Caco-2 (cell line): ENCODE measurements at regions of chr2 and their contacts with region 1.

Region 1: DNA sequence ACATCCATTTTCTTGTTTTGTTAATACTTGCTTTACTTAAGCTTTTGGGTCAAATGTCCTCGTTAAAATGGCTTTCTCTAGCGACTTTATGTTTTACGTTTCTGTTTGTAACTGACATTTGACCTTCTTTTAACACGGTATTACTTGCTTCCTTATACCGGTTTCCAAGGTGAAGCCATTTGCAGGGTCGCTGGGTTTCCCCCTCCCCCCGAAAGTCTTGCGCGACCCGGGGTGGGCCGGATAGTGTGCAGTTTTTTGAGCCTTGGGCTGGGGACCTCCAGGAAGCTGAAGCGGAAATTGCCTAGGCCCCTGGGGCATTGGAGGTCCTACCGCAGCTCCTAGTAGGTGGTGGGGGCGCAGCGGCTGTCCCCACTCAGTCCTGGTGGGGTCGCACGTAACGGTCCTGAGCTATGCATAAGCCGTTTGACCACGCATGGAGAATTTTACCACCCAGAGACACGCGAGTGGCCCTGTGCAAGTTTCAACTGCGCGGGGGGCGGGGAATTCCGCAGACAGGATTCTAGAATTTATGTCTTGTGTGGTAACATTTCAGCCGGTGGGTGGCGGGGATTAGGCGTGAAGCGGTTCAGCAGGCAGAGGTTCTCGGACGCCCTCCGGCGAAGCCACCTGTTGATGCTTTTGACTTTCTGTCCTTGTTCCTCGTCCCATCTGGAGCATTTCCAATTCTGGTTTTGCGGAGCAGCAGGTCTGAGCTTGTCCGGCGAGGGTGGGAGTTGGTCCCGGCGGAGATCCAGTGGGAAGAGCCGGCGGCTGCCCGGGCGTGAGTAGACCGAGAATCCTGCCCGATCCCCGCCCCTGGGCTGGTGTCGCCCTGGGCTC is 2.4 kb downstream of the CFLAR start:
- DNase-seq: peak; percentile 89 to 91
- H3K4me3 ChIP-seq: peak overlapping the region; percentile 85
- H3K4me3 Mint-ChIP-seq: peak overlapping the region; percentile 98
- H3K27ac Mint-ChIP-seq: peak overlapping the region; percentile 91
- H3K4me1 ChIP-seq: peaks cover 42% of the 10 kb centered on the region
- H3K4me1 Mint-ChIP-seq: peaks cover 39% of the 10 kb centered on the region
- H3K27me3 ChIP-seq: no peaks in the 10 kb centered on the region
- H3K27me3 Mint-ChIP-seq: no peaks in the 10 kb centered on the region
- CTCF ChIP-seq: peak; percentile 16 to 58

Region 2: GRCh38 chr2:200888704-200889625 is 229.4 kb before region 1 on chr2 and contains the starts of genes NIF3L1 and PPIL3:
- CTCF ChIA-PET with region 1: no interaction called
- POLR2A ChIA-PET with region 1: no interaction called
- intact Hi-C with region 1: loop called (anchors 5 kb)
- DNase-seq: peak; percentile 98 to 99
- H3K4me3 ChIP-seq: peak within 1 kb of the TSS; percentile 56
- H3K4me3 Mint-ChIP-seq: peak within 1 kb of the TSS; percentile 89
- H3K27ac Mint-ChIP-seq: peak within 1 kb of the TSS; percentile 97
- H3K4me1 ChIP-seq: 0 out of 2 replicates have a peak, but pooled peaks cover 3% of the 10 kb centered on the region
- H3K4me1 Mint-ChIP-seq: peaks cover 19% of the 10 kb centered on the region
- H3K27me3 ChIP-seq: no peaks in the 10 kb centered on the region
- H3K27me3 Mint-ChIP-seq: no peaks in the 10 kb centered on the region
- CTCF ChIP-seq: no peak
- total RNA-seq, gene NIF3L1: 40.7 and 49.7 TPM in 2 replicates
- total RNA-seq, gene PPIL3: 17.6 and 25.0 TPM in 2 replicates

Region 3: GRCh38 chr2:200963124-200963917 is 155.0 kb before region 1 on chr2 and contains the start of gene ORC2:
- CTCF ChIA-PET with region 1: no interaction called
- POLR2A ChIA-PET with region 1: no interaction called
- intact Hi-C with region 1: loop called (anchors 2 kb)
- DNase-seq: peak; percentile 96 to 98
- H3K4me3 ChIP-seq: peak within 1 kb of the TSS; percentile 64
- H3K4me3 Mint-ChIP-seq: peak within 1 kb of the TSS; percentile 91
- H3K27ac Mint-ChIP-seq: peak within 1 kb of the TSS; percentile 97
- H3K4me1 ChIP-seq: peaks cover 30% of the 10 kb centered on the region
- H3K4me1 Mint-ChIP-seq: peaks cover 29% of the 10 kb centered on the region
- H3K27me3 ChIP-seq: no peaks in the 10 kb centered on the region
- H3K27me3 Mint-ChIP-seq: no peaks in the 10 kb centered on the region
- CTCF ChIP-seq: peak; percentile 70 to 76
- total RNA-seq, gene ORC2: 45.5 and 47.3 TPM in 2 replicates

Region 4: GRCh38 chr2:201071479-201072200 is 46.7 kb before region 1 on chr2 and contains the starts of genes HYCC2 and NDUFB3:
- CTCF ChIA-PET with region 1: interaction called, 5 read pairs
- POLR2A ChIA-PET with region 1: no interaction called
- intact Hi-C with region 1: loop called (anchors 1 kb)
- DNase-seq: peak; percentile 96
- H3K4me3 ChIP-seq: peak within 1 kb of the TSS; percentile 71
- H3K4me3 Mint-ChIP-seq: peak within 1 kb of the TSS; percentile 87
- H3K27ac Mint-ChIP-seq: peak within 1 kb of the TSS; percentile 89
- H3K4me1 ChIP-seq: peaks cover 24% of the 10 kb centered on the region
- H3K4me1 Mint-ChIP-seq: peaks cover 11% of the 10 kb centered on the region
- H3K27me3 ChIP-seq: no peaks in the 10 kb centered on the region
- H3K27me3 Mint-ChIP-seq: no peaks in the 10 kb centered on the region
- CTCF ChIP-seq: peak; percentile 7 to 29
- total RNA-seq, gene HYCC2: 21.8 and 21.9 TPM in 2 replicates
- total RNA-seq, gene NDUFB3: 117 and 118 TPM in 2 replicates

Region 5: DNA sequence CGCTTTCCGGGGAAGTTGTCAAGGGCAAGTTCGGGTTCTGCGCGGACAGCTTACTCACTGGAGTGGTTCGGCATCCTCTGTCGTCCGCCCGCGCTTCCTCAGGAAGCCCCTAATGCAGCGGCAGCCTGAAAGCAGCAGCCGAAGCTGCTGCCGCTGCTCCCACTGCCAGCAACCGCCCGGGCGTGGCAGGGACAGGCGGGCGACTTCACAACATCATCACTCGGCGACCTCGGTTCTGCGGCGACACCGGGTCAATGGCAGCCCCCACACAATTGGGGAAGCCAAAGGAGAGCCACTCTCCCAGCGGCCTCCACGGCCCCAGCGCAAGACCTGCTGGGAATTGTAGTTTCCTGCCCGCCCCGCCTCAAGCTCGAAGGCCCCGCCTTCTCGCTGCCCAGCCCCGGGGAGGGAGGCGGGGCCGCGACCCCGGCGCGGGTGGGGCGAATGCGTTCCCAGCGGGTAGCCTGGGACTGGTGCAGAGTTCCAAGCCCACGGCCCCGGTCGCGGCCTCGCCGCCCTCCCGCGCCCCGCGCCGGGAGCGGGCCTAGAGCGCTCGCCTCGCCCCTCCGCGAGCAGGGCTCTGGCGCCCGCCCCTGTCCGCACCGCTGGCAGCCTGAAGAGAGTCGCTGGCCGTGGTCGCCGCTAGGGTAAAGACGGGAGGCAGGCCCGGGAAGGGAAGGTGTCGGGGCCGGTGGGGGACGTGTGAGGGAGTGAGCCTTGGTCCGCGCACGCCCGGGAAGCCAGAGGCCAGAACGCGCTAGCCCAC is 333.1 kb after region 1 on chr2 and contains the starts of genes STRADB and TRAK2:
- CTCF ChIA-PET with region 1: interaction called, 3 read pairs
- POLR2A ChIA-PET with region 1: no interaction called
- intact Hi-C with region 1: loop called (anchors 5 kb)
- DNase-seq: peak; percentile 98
- H3K4me3 ChIP-seq: peak within 1 kb of the TSS; percentile 86
- H3K4me3 Mint-ChIP-seq: peak within 1 kb of the TSS; percentile 94
- H3K27ac Mint-ChIP-seq: peak within 1 kb of the TSS; percentile 94
- H3K4me1 ChIP-seq: peaks cover 23% of the 10 kb centered on the region
- H3K4me1 Mint-ChIP-seq: peaks cover 15% of the 10 kb centered on the region
- H3K27me3 ChIP-seq: no peaks in the 10 kb centered on the region
- H3K27me3 Mint-ChIP-seq: no peaks in the 10 kb centered on the region
- CTCF ChIP-seq: peak in 1 of 2 experiments; percentile 13
- total RNA-seq, gene STRADB: 41.2 and 49.0 TPM in 2 replicates
- total RNA-seq, gene TRAK2: 21.9 and 23.2 TPM in 2 replicates

Region 6: GRCh38 chr2:201484805-201485204 is 366.5 kb after region 1 on chr2:
- CTCF ChIA-PET with region 1: no interaction called
- POLR2A ChIA-PET with region 1: no interaction called
- intact Hi-C with region 1: no loop called
- DNase-seq: no peak
- H3K4me3 ChIP-seq: no peak overlapping the region
- H3K4me3 Mint-ChIP-seq: no peak overlapping the region
- H3K27ac Mint-ChIP-seq: no peak overlapping the region
- H3K4me1 ChIP-seq: no peaks in the 10 kb centered on the region
- H3K4me1 Mint-ChIP-seq: no peaks in the 10 kb centered on the region
- H3K27me3 ChIP-seq: no peaks in the 10 kb centered on the region
- H3K27me3 Mint-ChIP-seq: no peaks in the 10 kb centered on the region
- CTCF ChIP-seq: no peak